Ovary (tissue), 10 donors: ENCODE measurements at regions of chr7 and their contacts with region 1.

Region 1: DNA sequence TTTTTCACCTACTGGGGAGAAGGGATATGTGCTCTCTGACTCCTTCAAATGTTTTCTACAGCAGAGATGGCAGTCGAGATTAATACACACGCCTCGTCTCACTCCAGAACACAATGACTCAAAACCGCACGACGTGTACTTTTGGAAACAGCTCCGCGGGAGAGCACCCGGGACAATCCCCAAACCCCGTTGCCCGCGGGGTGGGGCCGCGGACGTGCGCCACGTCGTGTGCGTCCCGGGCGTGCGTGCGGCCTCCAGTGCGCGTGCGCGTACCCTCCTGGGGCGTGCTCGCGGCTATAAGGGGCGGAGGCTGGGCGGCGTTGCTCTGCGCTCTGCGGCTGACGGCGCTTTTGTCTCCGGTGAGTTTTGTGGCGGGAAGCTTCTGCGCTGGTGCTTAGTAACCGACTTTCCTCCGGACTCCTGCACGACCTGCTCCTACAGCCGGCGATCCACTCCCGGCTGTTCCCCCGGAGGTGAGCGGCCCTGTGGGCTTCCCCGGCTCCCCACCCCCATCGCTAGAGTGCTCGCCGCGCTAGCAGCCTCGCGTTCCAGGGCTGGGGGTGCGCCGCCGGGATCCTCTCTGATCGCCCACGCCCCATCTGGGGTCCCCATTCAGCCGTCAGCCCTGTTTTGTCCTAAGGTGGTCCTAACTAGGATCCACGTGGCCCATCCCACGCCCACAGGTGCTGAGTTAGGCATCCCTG is at the start of gene HILPDA:
- DNase-seq: peak; percentile 92 to 96 (median 92)
- H3K4me3 ChIP-seq: peak within 1 kb of the TSS; percentile 81
- H3K27ac ChIP-seq: peak within 1 kb of the TSS; percentile 90 to 94
- H3K4me1 ChIP-seq: peaks cover 15% of the 10 kb centered on the region
- H3K27me3 ChIP-seq: no peaks in the 10 kb centered on the region
- CTCF ChIP-seq: no peak
- EP300 ChIP-seq: peak; percentile 63
- POLR2A ChIP-seq: peak; percentile 67
- total RNA-seq, gene HILPDA: 10.2 to 69.7 (median 32.9) TPM

Region 2: GRCh38 chr7:128388145-128388485 is 67.6 kb before region 1 on chr7:
- intact Hi-C with region 1: no loop called
- DNase-seq: no peak
- H3K4me3 ChIP-seq: no peak overlapping the region
- H3K27ac ChIP-seq: no peak overlapping the region
- H3K4me1 ChIP-seq: no peaks in the 10 kb centered on the region
- H3K27me3 ChIP-seq: no peaks in the 10 kb centered on the region
- CTCF ChIP-seq: no peak
- EP300 ChIP-seq: no peak
- POLR2A ChIP-seq: no peak

Region 3: GRCh38 chr7:128398016-128398840 is 57.5 kb before region 1 on chr7:
- intact Hi-C with region 1: loop called in 2 of 4 experiments (anchors 2 to 10 kb)
- DNase-seq: peak; percentile 54 to 79 (median 74)
- H3K4me3 ChIP-seq: no peak overlapping the region
- H3K27ac ChIP-seq: no peak overlapping the region
- H3K4me1 ChIP-seq: no peaks in the 10 kb centered on the region
- H3K27me3 ChIP-seq: no peaks in the 10 kb centered on the region
- CTCF ChIP-seq: peak; percentile 83 to 88 (median 86)
- EP300 ChIP-seq: no peak
- POLR2A ChIP-seq: no peak

Region 4: GRCh38 chr7:128409596-128410160 is 46.0 kb before region 1 on chr7 and contains the start of gene IMPDH1:
- intact Hi-C with region 1: loop called in 1 of 4 experiments (anchors 10 kb)
- DNase-seq: peak; percentile 94 to 96 (median 95)
- H3K4me3 ChIP-seq: peak within 1 kb of the TSS; percentile 72
- H3K27ac ChIP-seq: peak within 1 kb of the TSS; percentile 74 to 93
- H3K4me1 ChIP-seq: peaks cover 8% of the 10 kb centered on the region
- H3K27me3 ChIP-seq: no peaks in the 10 kb centered on the region
- CTCF ChIP-seq: no peak
- EP300 ChIP-seq: no peak
- POLR2A ChIP-seq: peak; percentile 33
- total RNA-seq, gene IMPDH1: 10.3 to 66.9 (median 41.4) TPM

Region 5: DNA sequence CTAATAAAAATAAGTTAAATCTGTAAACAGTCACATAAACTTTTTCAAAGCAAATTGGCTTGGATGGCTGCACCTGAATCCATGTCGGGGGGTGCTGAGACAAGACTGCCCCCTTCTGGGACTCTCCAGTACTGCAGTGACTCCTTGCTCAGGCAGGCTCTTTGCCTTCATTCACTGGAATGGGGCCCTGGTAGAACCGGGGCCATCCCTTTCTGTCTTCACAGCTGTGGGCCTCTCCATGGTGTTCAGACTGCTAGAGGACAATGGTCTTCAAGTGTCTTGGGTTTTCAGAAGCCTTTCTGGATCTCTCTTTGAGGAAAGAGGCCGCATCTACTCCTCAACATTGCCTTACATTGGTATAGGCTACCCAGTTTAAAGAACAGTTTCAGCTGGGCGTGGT is 29.9 kb before region 1 on chr7:
- intact Hi-C with region 1: loop called (anchors 2 to 5 kb)
- DNase-seq: peak; percentile 57 to 80 (median 77)
- H3K4me3 ChIP-seq: no peak overlapping the region
- H3K27ac ChIP-seq: no peak overlapping the region
- H3K4me1 ChIP-seq: peaks cover 6% of the 10 kb centered on the region
- H3K27me3 ChIP-seq: no peaks in the 10 kb centered on the region
- CTCF ChIP-seq: peak; percentile 39 to 75 (median 55)
- EP300 ChIP-seq: no peak
- POLR2A ChIP-seq: no peak

Region 6: GRCh38 chr7:128791121-128791961 is 335.6 kb after region 1 on chr7:
- intact Hi-C with region 1: no loop called
- DNase-seq: peak; percentile 64 to 74 (median 69)
- H3K4me3 ChIP-seq: peak overlapping the region; percentile 70
- H3K27ac ChIP-seq: peak overlapping the region; percentile 23 to 39
- H3K4me1 ChIP-seq: peaks cover 4% of the 10 kb centered on the region
- H3K27me3 ChIP-seq: no peaks in the 10 kb centered on the region
- CTCF ChIP-seq: no peak
- EP300 ChIP-seq: no peak
- POLR2A ChIP-seq: no peak

Region 7: DNA sequence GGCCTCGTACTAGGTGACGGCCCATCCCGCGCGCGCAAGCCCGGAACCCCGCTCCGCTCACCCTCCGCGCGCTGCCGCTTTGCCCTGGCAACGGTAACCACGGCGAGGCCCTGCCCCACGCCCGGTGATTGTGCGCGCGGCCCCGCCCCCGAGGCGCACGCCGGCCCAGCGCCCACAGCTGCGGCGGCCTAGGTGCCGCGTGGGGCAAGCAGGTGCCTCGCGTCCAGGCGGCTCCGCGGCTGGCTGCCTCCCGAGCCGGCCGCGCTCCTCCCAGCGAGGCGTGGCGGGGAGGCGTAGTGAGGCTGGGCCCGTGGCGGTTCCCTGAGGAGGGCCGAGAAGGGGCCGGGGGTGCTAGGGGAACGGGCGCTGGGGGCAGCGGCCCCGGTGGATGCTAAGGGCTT is 1046.7 kb after region 1 on chr7 and contains the start of gene SMKR1:
- intact Hi-C with region 1: no loop called
- DNase-seq: peak; percentile 51 to 83 (median 71)
- H3K4me3 ChIP-seq: peak within 1 kb of the TSS; percentile 35
- H3K27ac ChIP-seq: no peak within 1 kb of the TSS
- H3K4me1 ChIP-seq: peaks cover 1% of the 10 kb centered on the region
- H3K27me3 ChIP-seq: no peaks in the 10 kb centered on the region
- CTCF ChIP-seq: no peak
- EP300 ChIP-seq: no peak
- POLR2A ChIP-seq: no peak
- total RNA-seq, gene SMKR1: 0.48 to 3.2 (median 1.2) TPM in 5 of 7 donors, not detected in the others